ENCODE measurements at regions of chr1 and their contacts with region 1.

Region 1: DNA sequence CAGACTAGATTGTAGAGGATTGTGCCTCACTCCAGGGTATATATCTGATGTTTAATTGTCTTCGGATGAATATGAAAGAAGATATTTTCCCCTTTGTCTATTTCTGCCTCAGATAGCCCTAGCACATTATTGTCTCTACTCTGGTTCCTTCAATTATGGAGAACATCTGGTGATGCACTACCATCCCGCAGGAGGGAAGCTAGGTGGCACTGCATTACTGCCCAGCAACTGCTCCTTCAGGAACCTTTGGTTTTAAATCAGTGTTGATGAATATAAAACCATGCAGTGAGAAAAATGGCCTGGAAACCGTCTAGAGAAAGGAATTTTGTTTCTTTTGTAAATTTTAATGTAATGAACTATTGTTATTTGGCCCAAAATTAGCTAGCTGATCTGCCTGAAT is 68.5 kb downstream of the GPR88 start:
- DNase-seq: peak in 1 of 2 donors; percentile 69
- ATAC-seq: peak; percentile 80
- H3K4me3 ChIP-seq: no peak overlapping the region
- H3K27ac ChIP-seq: no peak overlapping the region
- H3K4me1 ChIP-seq: peaks cover 0 to 2% of the 10 kb centered on the region in 2 donors
- H3K27me3 ChIP-seq: no peaks in the 10 kb centered on the region

Region 2: GRCh38 chr1:100622037-100622436 is 15.6 kb after region 1 on chr1:
- intact Hi-C with region 1: no loop called
- DNase-seq: no peak
- ATAC-seq: no peak
- H3K4me3 ChIP-seq: no peak overlapping the region
- H3K27ac ChIP-seq: no peak overlapping the region
- H3K4me1 ChIP-seq: no peaks in the 10 kb centered on the region
- H3K27me3 ChIP-seq: no peaks in the 10 kb centered on the region

Region 3: DNA sequence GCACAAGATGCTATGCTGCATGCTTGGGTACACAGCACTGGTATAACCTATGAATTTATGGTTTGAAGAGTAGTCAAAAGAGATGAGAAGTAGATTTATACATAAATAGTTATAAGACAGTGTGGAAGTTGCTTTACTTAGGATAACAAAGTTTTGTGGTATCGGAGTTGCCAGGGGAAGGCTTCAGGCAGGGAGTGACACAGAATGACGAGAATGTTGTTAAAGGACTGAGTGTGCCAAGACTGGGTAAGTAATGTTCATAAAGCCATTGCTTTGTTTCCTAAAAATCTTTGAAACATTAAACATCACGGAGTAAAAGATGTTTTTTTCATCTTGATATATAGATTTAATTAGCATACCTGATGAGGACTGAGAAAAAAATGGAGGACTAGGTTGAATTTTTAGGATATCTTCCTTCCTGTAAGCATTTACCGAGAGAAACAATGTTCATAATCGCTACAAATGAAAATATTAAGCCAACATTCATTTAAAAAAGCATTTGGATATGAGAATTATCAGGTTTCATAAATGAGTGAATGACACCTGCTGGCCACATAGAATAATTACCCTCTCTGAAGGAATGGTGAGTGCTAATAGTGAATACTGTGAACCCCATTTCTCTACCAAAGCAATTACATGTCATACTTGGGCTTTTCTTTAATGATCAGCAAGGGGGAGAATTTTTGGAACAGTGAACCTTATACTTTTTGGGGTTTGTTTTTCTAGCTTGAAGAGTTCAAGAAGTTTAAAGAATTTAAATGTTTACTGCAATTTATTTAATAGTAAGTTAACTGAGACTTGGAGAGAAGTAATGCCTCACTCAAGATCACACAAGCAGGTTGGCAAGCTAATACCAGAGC is 259.8 kb after region 1 on chr1:
- intact Hi-C with region 1: loop called (anchors 1 to 2 kb)
- DNase-seq: no peak
- ATAC-seq: peak; percentile 64
- H3K4me3 ChIP-seq: no peak overlapping the region
- H3K27ac ChIP-seq: no peak overlapping the region
- H3K4me1 ChIP-seq: no peaks in the 10 kb centered on the region
- H3K27me3 ChIP-seq: no peaks in the 10 kb centered on the region